ENCODE measurements at regions of chr4 and their contacts with region 1.

Region 1: GRCh38 chr4:16001484-16001858 is 38.5 kb upstream of the FGFBP2 start:
- DNase-seq: peak; percentile 67
- H3K4me3 Mint-ChIP-seq: no peak overlapping the region
- H3K27ac Mint-ChIP-seq: no peak overlapping the region
- H3K4me1 Mint-ChIP-seq: no peaks in the 10 kb centered on the region
- H3K27me3 Mint-ChIP-seq: no peaks in the 10 kb centered on the region

Region 2: GRCh38 chr4:15479089-15479912 is 522.2 kb before region 1 on chr4:
- CTCF ChIA-PET with region 1: no interaction called
- intact Hi-C with region 1: loop called (anchors 1 kb)
- DNase-seq: no peak
- H3K4me3 Mint-ChIP-seq: no peak overlapping the region
- H3K27ac Mint-ChIP-seq: no peak overlapping the region
- H3K4me1 Mint-ChIP-seq: no peaks in the 10 kb centered on the region
- H3K27me3 Mint-ChIP-seq: no peaks in the 10 kb centered on the region

Region 3: DNA sequence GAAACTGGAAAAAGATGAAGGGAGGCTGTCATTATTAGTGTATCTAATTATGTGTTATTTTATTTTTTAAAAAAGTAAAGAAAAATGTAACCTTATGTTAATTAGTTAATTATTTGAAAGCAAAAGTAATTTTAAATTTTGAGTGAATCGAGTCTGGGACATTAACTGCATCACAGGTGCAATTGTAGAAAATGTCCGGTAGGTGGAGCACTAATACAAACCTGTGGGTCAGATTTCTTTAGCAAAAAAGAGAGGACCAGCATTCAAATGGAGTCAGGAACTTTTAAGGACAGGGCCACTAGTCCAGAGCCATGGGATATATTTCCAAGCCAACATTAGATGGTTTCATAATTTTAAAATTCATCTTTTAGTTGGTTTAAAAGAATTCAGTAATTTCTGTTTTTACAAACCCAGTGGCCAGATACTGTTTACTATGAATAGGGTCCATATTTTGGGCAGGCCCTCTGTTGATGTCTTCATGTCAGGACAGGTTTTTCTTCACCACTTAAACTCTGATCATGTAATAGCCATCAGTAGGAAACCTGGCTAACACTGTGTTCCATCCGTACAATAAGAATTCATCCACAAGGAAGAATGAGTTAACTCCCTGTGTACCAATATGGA is 271.4 kb before region 1 on chr4:
- CTCF ChIA-PET with region 1: interaction called, 5 read pairs
- intact Hi-C with region 1: loop called (anchors 1 kb)
- DNase-seq: peak; percentile 54
- H3K4me3 Mint-ChIP-seq: no peak overlapping the region
- H3K27ac Mint-ChIP-seq: no peak overlapping the region
- H3K4me1 Mint-ChIP-seq: peaks cover 13% of the 10 kb centered on the region
- H3K27me3 Mint-ChIP-seq: no peaks in the 10 kb centered on the region

Region 4: GRCh38 chr4:15765910-15766697 is 235.4 kb before region 1 on chr4:
- CTCF ChIA-PET with region 1: no interaction called
- intact Hi-C with region 1: no loop called
- DNase-seq: peak; percentile 75
- H3K4me3 Mint-ChIP-seq: no peak overlapping the region
- H3K27ac Mint-ChIP-seq: peak overlapping the region; percentile 50
- H3K4me1 Mint-ChIP-seq: peaks cover 56% of the 10 kb centered on the region
- H3K27me3 Mint-ChIP-seq: no peaks in the 10 kb centered on the region

Region 5: DNA sequence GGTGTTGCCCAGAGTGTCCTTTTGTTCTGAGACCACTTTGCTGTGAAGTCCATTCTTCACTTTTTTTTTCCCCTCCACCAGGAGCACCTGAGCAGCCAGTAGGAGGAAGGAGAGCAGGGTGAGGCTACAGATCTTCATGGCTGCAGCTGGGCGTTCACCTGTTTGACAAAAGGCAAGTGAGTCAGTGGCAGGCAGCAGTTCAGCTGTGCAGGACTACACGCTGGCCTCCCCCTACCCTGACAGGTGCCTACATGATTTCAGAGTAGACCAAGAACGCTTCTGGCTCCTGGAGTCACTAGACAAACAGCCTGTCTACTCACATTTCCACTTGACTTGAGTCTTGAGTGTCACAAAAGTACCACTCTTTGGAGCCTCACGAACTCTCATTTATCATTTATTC is 65.0 kb before region 1 on chr4:
- CTCF ChIA-PET with region 1: no interaction called
- intact Hi-C with region 1: no loop called
- DNase-seq: no peak
- H3K4me3 Mint-ChIP-seq: no peak overlapping the region
- H3K27ac Mint-ChIP-seq: no peak overlapping the region
- H3K4me1 Mint-ChIP-seq: no peaks in the 10 kb centered on the region
- H3K27me3 Mint-ChIP-seq: no peaks in the 10 kb centered on the region

Region 6: DNA sequence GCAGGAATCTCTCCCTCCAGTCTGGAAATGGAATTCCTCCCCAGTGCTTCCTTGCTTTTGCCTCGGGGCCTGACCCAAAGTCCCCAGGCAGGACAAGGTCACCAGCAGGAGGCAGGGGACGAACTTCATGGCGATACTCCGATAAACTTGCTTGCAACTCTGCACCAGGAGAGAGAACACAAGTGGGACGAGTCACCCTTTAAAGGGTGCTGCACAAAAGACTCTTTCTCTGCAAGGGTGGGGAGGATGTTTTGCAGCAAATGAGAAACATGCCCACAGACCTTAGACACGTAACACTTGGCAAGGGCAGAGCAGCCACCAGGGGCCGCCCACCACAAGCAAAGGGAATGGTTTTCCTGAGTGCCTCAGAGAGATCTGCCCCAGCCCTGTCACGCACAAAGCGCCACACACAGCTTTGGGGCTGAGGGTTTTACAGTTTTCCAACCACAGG is 38.4 kb before region 1 on chr4 and contains the start of gene FGFBP2:
- CTCF ChIA-PET with region 1: interaction called, 29 read pairs
- intact Hi-C with region 1: loop called (anchors 1 kb)
- DNase-seq: peak; percentile 76
- H3K4me3 Mint-ChIP-seq: no peak within 1 kb of the TSS
- H3K27ac Mint-ChIP-seq: no peak within 1 kb of the TSS
- H3K4me1 Mint-ChIP-seq: peaks cover 11% of the 10 kb centered on the region
- H3K27me3 Mint-ChIP-seq: peaks cover 2% of the 10 kb centered on the region
- total RNA-seq, gene FGFBP2: not detected

Region 7: GRCh38 chr4:15976456-15977447 is 24.7 kb before region 1 on chr4:
- CTCF ChIA-PET with region 1: interaction called, 15 read pairs
- intact Hi-C with region 1: no loop called
- DNase-seq: no peak
- H3K4me3 Mint-ChIP-seq: no peak overlapping the region
- H3K27ac Mint-ChIP-seq: no peak overlapping the region
- H3K4me1 Mint-ChIP-seq: no peaks in the 10 kb centered on the region
- H3K27me3 Mint-ChIP-seq: no peaks in the 10 kb centered on the region

Region 8: GRCh38 chr4:15990570-15991285 is 10.7 kb before region 1 on chr4:
- CTCF ChIA-PET with region 1: interaction called, 13 read pairs
- intact Hi-C with region 1: no loop called
- DNase-seq: no peak
- H3K4me3 Mint-ChIP-seq: no peak overlapping the region
- H3K27ac Mint-ChIP-seq: no peak overlapping the region
- H3K4me1 Mint-ChIP-seq: peaks cover 2% of the 10 kb centered on the region
- H3K27me3 Mint-ChIP-seq: peaks cover 5% of the 10 kb centered on the region